Sigmoid colon (tissue), 7 donors: ENCODE measurements at regions of chr2 and their contacts with region 1.

Region 1: DNA sequence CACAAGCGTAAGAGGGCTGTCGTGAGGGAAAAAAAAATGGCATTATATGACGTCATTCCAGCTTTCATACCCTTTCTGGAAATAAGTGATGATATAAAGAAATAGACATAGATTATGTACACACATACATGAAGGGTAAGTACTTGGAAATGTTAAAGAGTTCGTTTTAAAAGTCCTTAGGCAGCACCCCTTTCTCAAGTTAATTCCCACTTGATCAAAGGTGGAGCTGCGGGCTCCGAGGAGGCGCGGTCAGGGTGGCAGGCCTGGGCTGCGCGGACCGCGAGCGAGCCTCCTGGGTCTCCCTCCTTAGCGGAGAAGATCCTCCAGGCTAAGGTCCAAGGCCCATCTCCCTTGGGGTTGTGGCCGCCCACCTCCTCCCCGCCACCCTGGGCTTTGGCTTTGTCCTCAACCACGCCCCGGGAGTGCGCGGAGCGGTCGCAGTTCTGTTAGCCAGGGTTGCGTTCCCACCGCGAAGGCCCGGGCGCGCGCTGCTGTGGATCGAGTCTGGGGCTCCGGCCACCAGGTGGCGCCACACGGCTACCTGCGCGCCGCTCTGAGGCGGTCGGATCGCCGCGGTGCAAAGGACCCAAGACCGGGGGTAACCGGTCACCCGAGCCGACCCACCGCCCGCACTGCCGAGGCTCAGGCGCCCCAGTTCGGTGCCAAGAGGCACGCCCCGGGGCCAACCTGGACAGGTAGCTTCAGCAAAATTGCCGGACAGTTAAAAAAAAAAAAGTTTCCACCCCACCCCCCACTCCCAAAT is 66.8 kb downstream of the HNRNPLL start:
- DNase-seq: peak; percentile 93
- H3K4me3 ChIP-seq: peak overlapping the region; percentile 43 to 54 (median 48)
- H3K27ac ChIP-seq: peak overlapping the region; percentile 75 to 88 (median 83)
- H3K4me1 ChIP-seq: peaks cover 0 to 40% (median 31%) of the 10 kb centered on the region in 4 donors
- H3K27me3 ChIP-seq: no peaks in the 10 kb centered on the region
- CTCF ChIP-seq: peak; percentile 82 to 95 (median 86)
- EP300 ChIP-seq: no peak
- POLR2A ChIP-seq: no peak

Region 2: DNA sequence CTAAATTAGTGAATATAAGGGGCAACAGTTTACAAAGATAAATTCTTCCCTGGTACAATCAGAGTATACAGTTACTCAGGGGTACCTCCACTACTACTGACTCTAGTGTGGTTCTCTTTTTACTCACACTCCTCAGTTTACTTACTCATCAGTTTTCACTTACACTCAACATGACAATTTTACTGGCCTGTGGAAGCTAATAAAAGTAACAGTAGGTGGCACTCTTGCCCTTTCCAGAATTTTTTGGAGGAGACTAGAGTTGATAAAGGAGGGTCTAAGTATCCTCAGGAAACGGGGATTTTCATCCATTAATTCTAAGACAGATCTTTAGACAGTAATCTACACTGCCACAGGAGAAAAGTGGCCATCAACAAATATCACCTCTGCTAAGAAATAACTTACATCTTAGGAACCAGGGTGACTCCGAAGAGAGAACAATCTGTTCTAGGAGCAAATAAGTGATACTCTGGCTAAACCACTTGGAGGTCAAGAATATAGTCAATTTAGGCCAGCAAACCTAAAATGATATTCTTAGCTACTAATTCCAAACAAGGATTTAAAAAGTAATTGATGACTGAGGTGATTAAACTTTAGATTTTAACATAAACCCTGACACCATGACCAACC is 220.1 kb before region 1 on chr2:
- intact Hi-C with region 1: loop called (anchors 5 kb)
- DNase-seq: no peak
- H3K4me3 ChIP-seq: no peak overlapping the region
- H3K27ac ChIP-seq: peak overlapping the region; percentile 51 to 74 (median 67)
- H3K4me1 ChIP-seq: peaks cover 0 to 29% (median 27%) of the 10 kb centered on the region in 4 donors
- H3K27me3 ChIP-seq: no peaks in the 10 kb centered on the region
- CTCF ChIP-seq: peak; percentile 46 to 75 (median 64)
- EP300 ChIP-seq: peak in 1 of 4 donors; percentile 10
- POLR2A ChIP-seq: no peak

Region 3: DNA sequence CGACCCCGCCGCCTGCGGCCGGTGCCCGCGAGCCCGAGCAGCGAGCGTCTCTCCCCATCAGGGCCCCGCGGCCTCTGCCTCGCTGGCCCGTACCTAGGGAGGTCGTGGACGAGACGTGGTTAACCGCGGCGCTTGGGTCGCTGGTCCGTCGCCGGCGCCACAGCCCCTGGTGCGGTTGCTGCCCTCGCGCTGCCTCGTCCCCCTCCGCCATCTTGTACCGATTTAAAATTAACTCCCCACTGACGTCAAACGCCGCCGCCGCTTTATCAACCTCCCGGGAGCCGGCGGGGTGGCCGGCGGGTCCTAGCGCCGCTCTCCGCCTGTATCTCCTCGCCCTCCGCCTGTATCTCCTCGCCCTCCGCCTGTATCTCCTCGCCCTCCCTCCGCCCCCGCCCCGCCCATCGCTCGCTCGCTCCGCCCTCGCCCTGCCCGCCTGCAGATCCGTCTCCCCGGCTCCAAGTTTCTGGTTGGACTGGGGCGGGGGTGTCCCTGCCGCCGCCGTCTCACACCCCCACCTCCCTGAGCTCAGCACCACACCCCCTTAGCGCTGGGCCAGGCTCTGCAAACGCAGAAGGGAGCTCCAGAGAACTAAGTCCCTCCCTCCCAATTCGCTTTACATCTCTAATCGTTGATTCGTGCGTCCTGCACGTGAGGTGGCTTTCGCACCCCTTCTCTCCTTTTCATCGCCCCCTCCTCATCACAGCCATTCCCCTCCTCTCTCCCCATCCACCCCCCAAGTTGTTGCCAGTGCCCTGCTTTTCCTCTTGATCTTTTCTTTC is 158.7 kb before region 1 on chr2 and contains the start of gene ATL2:
- intact Hi-C with region 1: loop called (anchors 1 kb)
- DNase-seq: peak; percentile 98
- H3K4me3 ChIP-seq: peak within 1 kb of the TSS; percentile 80 to 98 (median 92)
- H3K27ac ChIP-seq: peak within 1 kb of the TSS; percentile 98 to 99 (median 99)
- H3K4me1 ChIP-seq: peaks cover 0 to 44% (median 27%) of the 10 kb centered on the region in 4 donors
- H3K27me3 ChIP-seq: no peaks in the 10 kb centered on the region
- CTCF ChIP-seq: no peak
- EP300 ChIP-seq: peak; percentile 13 to 76 (median 26)
- POLR2A ChIP-seq: peak; percentile 89 to 90
- total RNA-seq, gene ATL2: 176 to 271 (median 205) TPM

Region 4: DNA sequence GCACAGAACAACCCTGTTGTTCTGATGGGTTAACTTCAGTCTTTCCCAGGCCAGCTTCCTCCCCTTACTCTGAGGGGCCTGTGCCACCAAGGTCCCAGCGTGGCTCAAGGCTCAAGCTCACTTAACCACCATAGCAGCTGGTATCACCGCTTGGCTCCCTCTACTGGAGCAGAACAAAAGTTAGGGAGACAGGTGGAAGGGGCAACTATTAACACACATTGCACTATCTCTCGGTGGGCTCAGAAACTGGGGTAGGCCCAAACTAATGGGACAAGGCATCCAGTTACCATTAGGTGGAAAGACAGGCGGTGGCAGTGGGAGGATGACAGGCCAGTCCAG is 70.2 kb before region 1 on chr2:
- intact Hi-C with region 1: loop called (anchors 5 kb)
- DNase-seq: no peak
- H3K4me3 ChIP-seq: no peak overlapping the region
- H3K27ac ChIP-seq: peak overlapping the region; percentile 86 to 91 (median 88)
- H3K4me1 ChIP-seq: peaks cover 0 to 96% (median 73%) of the 10 kb centered on the region in 4 donors
- H3K27me3 ChIP-seq: no peaks in the 10 kb centered on the region
- CTCF ChIP-seq: peak in 1 of 4 experiments; percentile 23
- EP300 ChIP-seq: no peak
- POLR2A ChIP-seq: no peak

Region 5: DNA sequence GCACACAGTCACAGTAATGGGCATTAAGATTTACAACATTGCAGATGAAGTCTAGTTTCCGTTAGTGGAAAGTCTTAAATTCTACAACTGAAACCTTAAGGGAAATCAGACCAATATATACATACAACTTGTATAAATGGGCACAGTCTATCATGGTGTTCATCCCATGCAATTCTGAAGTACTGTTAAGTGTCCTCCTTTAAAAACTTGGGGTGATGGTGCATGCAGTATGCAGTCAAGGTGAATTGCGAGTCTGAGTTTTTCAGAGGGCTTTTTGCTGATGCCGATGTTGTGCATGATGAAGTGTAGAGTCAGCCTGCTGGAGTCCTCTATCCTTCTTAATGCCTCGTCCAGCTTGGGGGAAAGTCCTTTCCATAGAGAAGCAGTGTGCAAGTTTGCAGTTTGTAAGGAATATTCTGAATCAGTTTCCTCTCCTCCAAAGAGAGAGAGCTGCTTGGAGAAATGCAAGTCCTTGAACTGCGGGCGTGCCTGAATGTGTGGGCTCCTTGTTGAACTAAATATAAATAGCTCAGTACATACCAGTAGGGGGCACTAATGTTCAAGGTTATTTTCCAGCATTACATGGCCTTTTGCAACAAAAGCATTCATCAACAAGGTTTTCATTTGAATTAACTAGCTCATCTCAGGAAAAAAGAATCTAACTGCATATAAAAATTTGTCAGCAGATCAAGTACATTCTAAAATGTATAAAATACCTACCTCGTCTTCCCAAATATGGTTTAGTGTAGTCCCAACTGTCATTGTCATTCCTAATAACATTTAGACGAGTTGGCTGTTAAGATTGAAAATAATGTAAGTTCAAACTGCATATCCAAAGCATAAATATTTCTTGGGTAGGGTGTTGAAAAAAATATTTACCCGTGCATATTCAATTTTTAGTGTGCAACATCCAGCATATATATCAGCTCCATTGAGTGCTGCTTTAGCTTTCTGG is 45.5 kb after region 1 on chr2:
- intact Hi-C with region 1: loop called (anchors 5 kb)
- DNase-seq: no peak
- H3K4me3 ChIP-seq: no peak overlapping the region
- H3K27ac ChIP-seq: peak overlapping the region in 2 of 4 donors; percentile 17 to 27
- H3K4me1 ChIP-seq: peaks cover 0 to 39% (median 11%) of the 10 kb centered on the region in 4 donors
- H3K27me3 ChIP-seq: no peaks in the 10 kb centered on the region
- CTCF ChIP-seq: peak; percentile 31 to 63 (median 60)
- EP300 ChIP-seq: no peak
- POLR2A ChIP-seq: no peak

Region 6: DNA sequence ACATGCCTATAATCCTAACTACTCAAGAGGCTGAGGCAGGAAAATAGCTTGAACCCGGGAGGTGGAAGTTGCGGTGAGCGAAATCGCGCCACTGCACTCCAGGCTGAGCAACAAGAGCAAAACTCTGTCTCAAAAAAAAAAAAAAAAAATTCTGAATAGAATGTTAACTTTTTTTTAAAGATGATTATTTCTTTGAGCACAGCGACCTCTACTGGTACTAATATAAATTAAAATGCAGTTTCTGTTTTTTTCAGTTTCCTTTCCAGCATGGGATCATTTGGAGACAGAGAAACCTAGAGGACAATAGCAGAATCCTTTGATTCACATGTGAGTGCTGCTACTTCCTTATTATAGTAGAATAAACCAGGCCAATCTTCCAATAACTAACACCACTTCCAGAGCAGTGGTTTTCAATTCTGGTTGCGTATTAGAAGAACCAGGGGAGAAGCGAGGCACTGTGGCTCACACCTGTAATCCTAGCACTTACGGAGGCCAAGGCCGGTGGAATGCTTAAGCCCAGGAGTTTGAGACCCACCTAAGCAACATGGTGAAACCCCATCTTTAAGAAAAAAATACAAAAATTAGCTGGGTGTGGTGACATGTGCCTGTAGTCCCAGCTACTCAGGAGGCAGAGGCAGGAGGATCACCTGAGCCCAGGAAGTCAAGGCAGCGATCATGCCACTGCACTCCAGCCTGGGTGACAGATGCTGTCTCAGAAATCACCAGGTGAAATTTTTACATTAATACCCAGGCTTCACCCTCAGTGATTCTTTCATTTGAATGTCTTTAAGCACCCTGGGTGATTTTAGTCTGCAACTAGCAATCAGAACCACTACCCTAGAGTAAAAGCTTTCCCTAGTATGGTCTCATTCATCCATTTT is 205.2 kb after region 1 on chr2:
- intact Hi-C with region 1: loop called (anchors 5 kb)
- DNase-seq: no peak
- H3K4me3 ChIP-seq: no peak overlapping the region
- H3K27ac ChIP-seq: peak overlapping the region; percentile 72 to 85 (median 81)
- H3K4me1 ChIP-seq: peaks cover 0 to 70% (median 49%) of the 10 kb centered on the region in 4 donors
- H3K27me3 ChIP-seq: no peaks in the 10 kb centered on the region
- CTCF ChIP-seq: peak; percentile 48 to 78 (median 58)
- EP300 ChIP-seq: no peak
- POLR2A ChIP-seq: no peak